Right lobe of liver (tissue), 6 donors: ENCODE measurements at regions of chr4 and their contacts with region 1.

Region 1: GRCh38 chr4:2761035-2761923 is 5.1 kb upstream of the TNIP2 start:
- DNase-seq: peak; percentile 61 to 76 (median 69)
- ATAC-seq: peak; percentile 52 to 71 (median 62)
- H3K4me3 ChIP-seq: no peak overlapping the region
- H3K27ac ChIP-seq: peak overlapping the region in 2 of 3 donors; percentile 55 to 73
- H3K4me1 ChIP-seq: peaks cover 0 to 20% (median 0%) of the 10 kb centered on the region in 4 donors
- H3K27me3 ChIP-seq: no peaks in the 10 kb centered on the region
- CTCF ChIP-seq: peak in 1 of 4 donors; percentile 17
- POLR2A ChIP-seq: no peak

Region 2: DNA sequence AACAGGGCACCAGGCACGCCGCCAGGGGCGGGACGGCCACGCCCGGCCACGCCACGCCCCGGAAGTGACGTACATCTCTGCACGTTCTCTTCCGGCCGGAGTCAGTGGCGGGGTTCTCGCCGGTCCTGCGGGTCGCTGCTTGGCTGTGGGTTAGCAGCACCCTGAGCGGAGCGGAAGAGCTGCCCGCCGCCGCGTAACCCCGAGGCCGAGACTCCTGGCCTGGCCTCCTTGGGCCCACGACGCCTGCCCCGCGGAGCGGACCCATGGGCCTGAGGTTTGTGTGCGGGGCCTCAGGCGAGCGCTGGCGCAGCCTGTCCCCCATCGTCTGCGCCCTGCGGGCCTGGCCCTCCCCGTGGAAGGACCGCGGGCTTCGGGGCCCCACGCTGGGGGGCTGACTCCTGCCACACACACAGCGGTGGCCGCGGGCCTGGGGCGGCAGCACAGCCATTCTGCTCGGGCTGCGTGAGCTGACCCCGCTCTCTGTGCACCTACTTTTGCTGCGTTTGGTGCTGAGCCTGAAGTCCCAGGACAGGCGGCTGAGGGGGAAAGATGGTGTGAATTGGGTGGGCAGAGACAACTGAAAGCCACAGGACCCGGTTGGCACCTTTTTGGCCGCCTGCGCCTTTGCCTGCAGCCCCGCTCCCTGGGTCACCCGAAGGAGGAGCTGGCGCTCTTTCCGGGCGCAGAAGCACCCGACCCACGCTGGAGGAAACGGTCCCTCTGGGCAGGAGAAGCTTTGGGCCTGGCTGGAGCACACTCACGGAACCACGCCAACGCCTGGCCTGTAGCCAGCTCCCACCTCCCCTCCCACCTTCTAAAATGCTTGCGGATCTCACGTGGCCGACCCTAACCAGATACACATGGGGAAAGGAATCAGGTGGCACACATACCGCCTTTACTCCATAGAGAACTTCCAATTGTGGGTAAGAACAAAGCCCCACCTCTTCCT is 173.8 kb after region 1 on chr4:
- intact Hi-C with region 1: loop called in 1 of 2 experiments (anchors 10 kb)
- DNase-seq: peak; percentile 97
- ATAC-seq: peak; percentile 68 to 83 (median 80)
- H3K4me3 ChIP-seq: peak overlapping the region; percentile 95 to 100 (median 99)
- H3K27ac ChIP-seq: peak overlapping the region; percentile 78 to 91 (median 83)
- H3K4me1 ChIP-seq: peaks cover 0 to 11% (median 3%) of the 10 kb centered on the region in 4 donors
- H3K27me3 ChIP-seq: no peaks in the 10 kb centered on the region
- CTCF ChIP-seq: peak in 3 of 4 donors; percentile 10 to 33 (median 10)
- POLR2A ChIP-seq: peak; percentile 92

Region 3: GRCh38 chr4:3037957-3038461 is 276.7 kb after region 1 on chr4:
- intact Hi-C with region 1: loop called in 1 of 2 experiments (anchors 10 kb)
- DNase-seq: peak in 1 of 3 donors; percentile 41
- ATAC-seq: no peak
- H3K4me3 ChIP-seq: no peak overlapping the region
- H3K27ac ChIP-seq: no peak overlapping the region
- H3K4me1 ChIP-seq: peaks cover 0 to 10% (median 0%) of the 10 kb centered on the region in 4 donors
- H3K27me3 ChIP-seq: no peaks in the 10 kb centered on the region
- CTCF ChIP-seq: no peak
- POLR2A ChIP-seq: no peak